GM12878 (cell line): ENCODE measurements at regions of chr6 and their contacts with region 1.

Region 1: DNA sequence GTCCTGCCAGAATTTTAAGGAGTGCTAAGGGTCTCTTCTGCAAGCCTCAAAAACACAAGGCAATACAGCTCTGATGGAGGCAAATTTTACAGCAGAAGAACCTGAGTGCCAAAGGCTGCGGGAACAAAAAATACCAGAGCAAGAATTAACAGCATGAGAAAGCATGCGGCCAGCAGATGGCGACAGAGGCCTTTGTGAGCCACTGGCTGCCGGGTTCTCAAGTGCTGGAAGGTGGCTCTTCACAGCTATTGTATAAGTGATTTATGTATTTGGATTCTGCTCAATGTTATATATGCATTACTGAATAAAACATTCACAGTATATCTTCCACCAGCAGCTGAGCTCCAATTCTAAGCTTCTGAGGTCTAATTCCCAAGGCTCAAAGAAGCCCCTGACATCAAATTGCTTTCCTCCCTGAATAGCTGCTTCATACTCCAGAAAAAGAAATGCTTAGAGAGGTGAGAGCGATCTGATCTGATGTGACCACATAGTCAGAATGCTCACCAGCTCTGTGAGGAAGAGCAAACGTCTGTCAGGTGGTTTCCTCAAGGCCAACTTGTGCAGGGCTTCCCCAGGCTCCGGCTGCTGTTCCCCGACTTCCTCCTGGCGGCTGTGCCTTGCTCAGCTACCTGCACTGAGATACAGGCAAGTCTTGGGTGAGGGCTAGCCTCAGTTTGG is 58.6 kb downstream of the PPP1R3G start:
- DNase-seq: peak; percentile 27
- ATAC-seq: peak; percentile 93
- H3K4me3 ChIP-seq: no peak overlapping the region
- H3K27ac ChIP-seq: no peak overlapping the region
- H3K4me1 ChIP-seq: peaks cover 11% of the 10 kb centered on the region
- H3K27me3 ChIP-seq: no peaks in the 10 kb centered on the region
- CTCF ChIP-seq: peak; percentile 82 to 99 (median 88); a peak in 5 of 6 replicates
- EP300 ChIP-seq: no peak
- POLR2A ChIP-seq: no peak
- RAD21 ChIP-seq: peak; percentile 98

Region 2: GRCh38 chr6:4743062-4743461 is 400.7 kb before region 1 on chr6:
- CTCF ChIA-PET with region 1: no interaction called
- POLR2A ChIA-PET with region 1: no interaction called
- RAD21 ChIA-PET with region 1: no interaction called
- SMC1A ChIA-PET with region 1: no interaction called
- in situ Hi-C with region 1: no loop called
- intact Hi-C with region 1: no loop called
- DNase-seq: no peak
- ATAC-seq: no peak
- H3K4me3 ChIP-seq: no peak overlapping the region
- H3K27ac ChIP-seq: no peak overlapping the region
- H3K4me1 ChIP-seq: no peaks in the 10 kb centered on the region
- H3K27me3 ChIP-seq: peaks cover 0 to 4% of the 10 kb centered on the region in 2 experiments; a peak in 1 of 4 replicates
- CTCF ChIP-seq: no peak
- EP300 ChIP-seq: no peak
- POLR2A ChIP-seq: no peak
- RAD21 ChIP-seq: no peak

Region 3: GRCh38 chr6:5103250-5103649 is 40.5 kb before region 1 on chr6:
- CTCF ChIA-PET with region 1: no interaction called
- POLR2A ChIA-PET with region 1: no interaction called
- RAD21 ChIA-PET with region 1: no interaction called
- SMC1A ChIA-PET with region 1: no interaction called
- in situ Hi-C with region 1: no loop called
- intact Hi-C with region 1: no loop called
- DNase-seq: no peak
- ATAC-seq: no peak
- H3K4me3 ChIP-seq: no peak overlapping the region
- H3K27ac ChIP-seq: no peak overlapping the region
- H3K4me1 ChIP-seq: no peaks in the 10 kb centered on the region
- H3K27me3 ChIP-seq: no peaks in the 10 kb centered on the region
- CTCF ChIP-seq: no peak
- EP300 ChIP-seq: no peak
- POLR2A ChIP-seq: no peak
- RAD21 ChIP-seq: no peak

Region 4: DNA sequence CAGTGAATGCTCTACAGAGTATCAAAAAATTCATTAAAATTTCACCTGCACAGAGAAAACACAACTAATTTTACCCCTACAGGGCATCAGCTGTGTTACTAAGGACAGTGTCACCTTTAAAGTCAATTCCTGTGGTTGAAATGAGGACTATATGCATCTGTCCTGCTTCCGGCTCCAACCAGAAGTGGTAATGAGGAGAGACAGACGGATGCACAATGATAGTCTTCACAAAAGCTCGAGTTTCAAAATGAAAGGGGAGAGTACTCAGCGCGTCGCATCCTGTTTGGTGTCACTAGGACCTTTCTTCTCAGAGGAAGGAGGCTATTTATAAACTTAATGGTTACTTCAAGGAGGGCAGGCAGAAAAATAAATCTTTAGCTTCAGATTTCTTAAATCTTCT is 30.5 kb after region 1 on chr6:
- CTCF ChIA-PET with region 1: interaction called, 65 read pairs
- POLR2A ChIA-PET with region 1: interaction called, 4 read pairs
- RAD21 ChIA-PET with region 1: interaction called, 24 read pairs
- SMC1A ChIA-PET with region 1: interaction called, 27 read pairs
- in situ Hi-C with region 1: no loop called
- intact Hi-C with region 1: no loop called
- DNase-seq: peak; percentile 87
- ATAC-seq: peak; percentile 99
- H3K4me3 ChIP-seq: no peak overlapping the region
- H3K27ac ChIP-seq: peak overlapping the region; percentile 93
- H3K4me1 ChIP-seq: peaks cover 29% of the 10 kb centered on the region
- H3K27me3 ChIP-seq: no peaks in the 10 kb centered on the region
- CTCF ChIP-seq: no peak
- EP300 ChIP-seq: no peak
- POLR2A ChIP-seq: peak; percentile 69
- RAD21 ChIP-seq: no peak

Region 5: DNA sequence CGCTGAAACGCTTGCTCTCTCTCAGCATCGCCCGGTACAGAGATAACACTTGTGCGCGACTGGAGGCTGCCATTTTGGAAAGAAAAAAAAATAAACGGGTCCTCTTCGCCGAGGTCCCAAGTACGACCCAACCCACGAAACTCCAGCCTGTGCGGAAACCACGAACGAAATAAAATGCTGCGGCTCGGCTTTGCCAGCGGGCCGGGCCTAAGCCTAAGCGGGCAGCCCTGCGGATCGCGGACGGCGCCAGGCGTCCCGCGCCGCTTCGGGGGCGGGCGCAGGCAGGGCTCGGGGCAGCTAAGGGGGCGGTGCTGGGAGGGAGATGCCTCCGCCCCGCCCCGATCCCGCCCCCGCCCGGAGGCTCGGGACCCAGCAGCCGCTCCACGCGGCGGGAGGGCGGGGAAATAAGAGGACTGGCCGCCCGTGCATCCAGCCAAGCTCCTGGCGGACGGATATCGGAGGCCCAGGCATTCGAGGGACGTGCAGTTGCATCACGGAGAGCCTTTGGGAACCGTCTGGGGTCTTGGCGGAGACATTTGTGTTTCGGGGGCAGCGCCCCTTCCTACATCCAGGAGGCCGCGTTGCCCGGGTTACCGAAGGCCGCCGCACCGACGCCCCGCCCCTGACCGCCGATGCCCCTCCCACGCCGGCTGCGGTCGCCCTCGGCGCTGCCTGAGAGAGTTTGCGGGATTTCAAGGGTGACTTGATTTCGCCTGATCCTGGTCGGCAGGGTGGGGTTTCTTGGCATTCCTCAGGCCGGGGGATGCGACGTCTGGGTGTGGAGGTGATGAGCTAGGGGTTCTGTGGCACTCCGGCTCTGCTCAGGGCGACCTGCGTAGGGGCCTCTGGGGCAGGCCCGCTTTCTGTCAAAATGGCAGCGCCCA is 117.1 kb after region 1 on chr6 and contains the starts of genes FARS2 and LYRM4:
- CTCF ChIA-PET with region 1: interaction called, 9 read pairs
- POLR2A ChIA-PET with region 1: interaction called, 3 read pairs
- RAD21 ChIA-PET with region 1: interaction called, 10 read pairs
- SMC1A ChIA-PET with region 1: interaction called, 6 read pairs
- in situ Hi-C with region 1: no loop called
- intact Hi-C with region 1: loop called (anchors 5 kb)
- DNase-seq: no peak
- ATAC-seq: peak; percentile 87
- H3K4me3 ChIP-seq: peak within 1 kb of the TSS; percentile 90
- H3K27ac ChIP-seq: peak within 1 kb of the TSS; percentile 98
- H3K4me1 ChIP-seq: peaks cover 8% of the 10 kb centered on the region; the same call in 1 of the 2 replicates
- H3K27me3 ChIP-seq: no peaks in the 10 kb centered on the region
- CTCF ChIP-seq: peak in 2 of 3 experiments; percentile 11 to 18; a peak in 2 of 6 replicates
- EP300 ChIP-seq: no peak
- POLR2A ChIP-seq: peak; percentile 64
- RAD21 ChIP-seq: no peak
- polyA plus RNA-seq, gene FARS2: 35.1 to 46.7 TPM
- polyA plus RNA-seq, gene LYRM4: 65.6 to 66.8 TPM

Region 6: DNA sequence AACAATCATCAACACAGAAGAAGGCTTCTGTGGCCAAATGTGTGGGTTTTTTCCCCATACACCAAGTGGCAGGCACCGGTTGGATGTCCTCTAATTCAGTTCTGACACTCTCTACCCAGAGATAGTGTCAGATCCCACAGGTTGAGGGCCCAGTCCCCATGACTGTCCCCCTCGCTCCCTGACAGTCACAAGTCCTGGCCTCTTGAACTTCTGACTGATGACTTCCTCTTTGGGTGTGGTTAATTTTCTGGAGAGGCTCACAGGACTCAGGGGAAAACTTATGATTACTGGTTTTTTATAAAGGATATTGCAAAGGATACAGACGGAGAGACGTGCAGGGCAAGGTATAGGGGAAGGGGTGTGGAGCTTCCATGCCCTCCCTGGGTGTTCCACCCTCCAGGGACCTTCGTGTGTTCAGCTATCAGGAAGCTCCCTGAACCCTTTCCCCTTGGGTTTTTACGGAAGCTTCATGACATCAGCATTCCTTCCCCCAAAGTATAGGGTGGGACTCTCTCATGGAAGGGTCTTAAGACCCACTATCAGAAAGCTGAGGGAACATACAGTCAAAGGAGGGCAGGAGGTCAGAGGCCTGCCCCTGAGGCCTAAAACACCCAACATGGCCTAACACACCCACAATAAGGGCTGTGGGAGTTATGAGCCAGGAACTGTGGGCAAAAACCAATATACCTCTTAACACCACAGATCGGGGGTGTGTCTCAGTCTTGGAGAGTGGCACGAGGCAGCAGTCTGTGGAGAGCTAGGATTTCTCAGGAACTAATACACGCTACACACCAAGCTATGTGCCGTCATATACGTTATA is 150.8 kb after region 1 on chr6:
- CTCF ChIA-PET with region 1: interaction called, 14 read pairs
- POLR2A ChIA-PET with region 1: no interaction called
- RAD21 ChIA-PET with region 1: interaction called, 7 read pairs
- SMC1A ChIA-PET with region 1: interaction called, 3 read pairs
- in situ Hi-C with region 1: no loop called
- intact Hi-C with region 1: no loop called
- DNase-seq: no peak
- ATAC-seq: peak; percentile 67
- H3K4me3 ChIP-seq: no peak overlapping the region
- H3K27ac ChIP-seq: no peak overlapping the region
- H3K4me1 ChIP-seq: peaks cover 11% of the 10 kb centered on the region; the same call in 1 of the 2 replicates
- H3K27me3 ChIP-seq: no peaks in the 10 kb centered on the region
- CTCF ChIP-seq: no peak
- EP300 ChIP-seq: no peak
- POLR2A ChIP-seq: no peak
- RAD21 ChIP-seq: no peak

Region 7: GRCh38 chr6:5379647-5380242 is 236.0 kb after region 1 on chr6:
- CTCF ChIA-PET with region 1: interaction called, 55 read pairs
- POLR2A ChIA-PET with region 1: no interaction called
- RAD21 ChIA-PET with region 1: interaction called, 24 read pairs
- SMC1A ChIA-PET with region 1: interaction called, 26 read pairs
- in situ Hi-C with region 1: no loop called
- intact Hi-C with region 1: loop called (anchors 1 kb)
- DNase-seq: peak; percentile 25
- ATAC-seq: peak; percentile 88
- H3K4me3 ChIP-seq: no peak overlapping the region
- H3K27ac ChIP-seq: no peak overlapping the region
- H3K4me1 ChIP-seq: no peaks in the 10 kb centered on the region
- H3K27me3 ChIP-seq: no peaks in the 10 kb centered on the region
- CTCF ChIP-seq: peak; percentile 76 to 87 (median 78)
- EP300 ChIP-seq: no peak
- POLR2A ChIP-seq: no peak
- RAD21 ChIP-seq: peak; percentile 82